Naive thymus-derived CD8-positive, alpha-beta T cell (primary cell): ENCODE measurements at regions of chr9 and their contacts with region 1.

Region 1: DNA sequence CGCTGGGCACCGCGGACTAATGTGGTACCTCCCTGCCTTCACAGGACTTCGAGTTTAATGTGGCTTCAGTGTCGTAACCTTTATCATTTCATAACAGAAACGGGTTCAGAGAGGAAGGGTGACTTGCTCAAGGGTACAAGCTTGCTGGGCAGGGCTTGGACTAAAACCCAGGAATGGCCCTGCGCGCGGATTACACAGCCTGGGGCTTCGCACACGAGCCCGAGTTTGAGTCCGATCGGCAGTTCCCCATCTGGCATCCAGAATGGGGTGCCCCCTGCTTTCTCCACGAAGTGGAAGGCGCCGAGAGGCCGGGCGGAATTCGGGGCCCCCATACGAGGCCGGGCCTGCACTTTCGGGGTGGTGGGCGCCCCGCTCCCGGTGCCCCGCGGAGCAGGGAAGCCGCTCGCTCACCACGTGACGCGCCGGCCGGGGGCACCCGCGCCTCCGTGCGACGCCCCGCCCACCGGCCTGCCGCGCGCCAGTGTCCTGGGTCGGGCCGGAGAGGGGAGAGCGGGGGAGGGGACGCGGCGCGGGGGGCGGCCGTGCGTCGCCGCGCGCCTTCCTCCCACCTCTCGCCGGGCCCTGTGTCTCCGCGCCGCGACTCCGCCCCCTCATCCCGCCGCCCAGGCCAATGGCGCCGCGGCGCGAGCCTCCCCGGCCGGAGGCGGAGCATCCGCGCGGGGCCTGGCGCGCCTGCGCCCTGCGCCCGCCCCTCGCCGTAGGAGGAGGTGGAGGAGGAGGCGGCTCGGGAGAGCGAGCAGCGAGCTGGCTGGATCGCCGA is at the start of gene SET:
- DNase-seq: peak; percentile 83 to 95 (median 92)
- ATAC-seq: peak; percentile 74 to 77
- H3K4me3 Mint-ChIP-seq: peak within 1 kb of the TSS; percentile 86 to 97 (median 91)
- H3K27ac Mint-ChIP-seq: peak within 1 kb of the TSS; percentile 89 to 100 (median 97)
- H3K4me1 Mint-ChIP-seq: peaks cover 37 to 72% (median 66%) of the 10 kb centered on the region in 4 donors
- H3K27me3 Mint-ChIP-seq: no peaks in the 10 kb centered on the region
- polyA plus RNA-seq, gene SET: 179 to 229 (median 209) TPM

Region 2: DNA sequence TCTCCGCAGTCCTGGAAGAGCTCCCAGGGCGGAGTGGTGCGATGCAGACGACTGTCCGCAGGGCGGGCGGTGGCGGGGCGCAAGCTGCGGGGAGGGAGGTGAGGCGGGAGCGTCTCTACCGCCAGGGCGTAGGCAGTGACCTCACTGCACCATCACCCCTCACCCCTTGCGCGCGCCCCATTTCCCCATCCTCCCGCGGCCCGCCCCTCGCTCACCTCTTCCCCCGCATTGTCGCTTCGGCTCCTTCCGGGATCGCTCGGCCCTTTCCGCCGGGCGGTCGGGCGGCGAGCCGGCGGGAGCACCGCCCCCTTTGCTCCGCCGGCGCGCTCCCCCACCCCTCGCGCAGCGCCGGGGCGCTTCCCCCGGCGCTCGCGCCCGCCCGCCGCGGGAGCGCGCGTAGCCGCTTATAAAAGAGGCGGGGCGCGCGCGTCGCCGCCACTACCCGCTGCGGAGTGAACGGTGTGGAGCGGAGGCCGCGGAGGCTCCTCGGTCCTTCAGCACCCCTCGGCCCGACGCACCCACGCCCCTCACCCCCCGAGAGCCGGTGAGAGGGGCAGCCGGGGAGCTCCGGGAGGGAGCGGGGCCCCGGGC is 136.5 kb before region 1 on chr9 and contains the start of gene SPTAN1:
- POLR2A ChIA-PET with region 1: interaction called, 17 read pairs
- DNase-seq: peak; percentile 92 to 98 (median 96)
- ATAC-seq: peak; percentile 83
- H3K4me3 Mint-ChIP-seq: peak within 1 kb of the TSS in 9 of 10 donors; percentile 89 to 95 (median 92)
- H3K27ac Mint-ChIP-seq: peak within 1 kb of the TSS; percentile 91 to 99 (median 96)
- H3K4me1 Mint-ChIP-seq: peaks cover 12 to 36% (median 24%) of the 10 kb centered on the region in 4 donors
- H3K27me3 Mint-ChIP-seq: no peaks in the 10 kb centered on the region
- polyA plus RNA-seq, gene SPTAN1: 38.2 to 117 (median 57.5) TPM

Region 3: DNA sequence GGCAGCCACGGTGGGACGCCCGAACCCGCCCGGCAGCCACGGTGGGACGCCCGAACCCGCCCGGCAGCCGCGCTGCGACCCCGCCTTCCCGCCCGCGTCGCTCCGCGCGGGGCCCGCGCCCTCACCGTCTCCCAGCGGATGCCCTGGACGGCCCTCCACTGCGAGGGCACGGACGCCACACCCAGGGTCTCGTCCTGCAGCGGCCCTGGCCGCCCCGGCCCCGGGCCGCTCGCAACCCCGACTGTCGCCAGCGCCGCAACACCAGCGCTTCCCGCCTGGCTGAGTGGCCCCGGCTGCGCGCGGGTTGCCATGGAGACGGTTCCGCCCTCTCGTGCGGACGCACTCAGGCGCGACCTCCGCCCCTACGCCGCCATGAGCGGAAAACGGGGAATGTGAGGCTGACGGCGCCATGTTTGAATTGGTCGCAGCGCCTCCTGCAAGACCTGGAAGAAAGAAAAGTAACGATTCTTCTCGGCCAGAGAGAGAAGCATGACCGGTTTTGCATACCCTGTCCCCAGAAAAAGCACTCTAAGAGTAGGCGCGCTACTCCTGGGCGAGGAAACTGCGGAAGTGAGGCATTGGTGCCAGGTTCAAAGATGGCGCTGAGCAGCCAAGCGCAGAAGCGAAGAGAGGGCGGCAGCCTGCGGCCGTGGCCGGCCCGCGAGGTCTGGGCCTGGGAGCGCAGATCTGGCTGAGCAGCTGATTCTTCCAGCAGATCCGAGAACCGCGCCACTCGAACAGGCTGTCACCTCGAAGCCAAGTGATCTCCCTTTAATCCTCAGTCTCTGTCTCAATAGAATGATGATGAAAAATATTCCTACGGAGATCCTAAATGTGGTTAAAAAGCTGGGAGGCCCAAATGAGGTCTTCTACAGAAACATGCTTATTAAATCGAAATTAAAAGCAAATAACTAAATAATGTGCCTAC is 32.0 kb before region 1 on chr9 and contains the start of gene DYNC2I2:
- POLR2A ChIA-PET with region 1: interaction called, 34 read pairs
- DNase-seq: peak; percentile 91 to 98 (median 96)
- ATAC-seq: peak; percentile 96 to 98
- H3K4me3 Mint-ChIP-seq: peak within 1 kb of the TSS; percentile 90 to 97 (median 94)
- H3K27ac Mint-ChIP-seq: peak within 1 kb of the TSS; percentile 96 to 100 (median 99)
- H3K4me1 Mint-ChIP-seq: peaks cover 0 to 17% (median 3%) of the 10 kb centered on the region in 4 donors
- H3K27me3 Mint-ChIP-seq: no peaks in the 10 kb centered on the region
- polyA plus RNA-seq, gene DYNC2I2: 2.7 to 4.1 (median 3.9) TPM

Region 4: DNA sequence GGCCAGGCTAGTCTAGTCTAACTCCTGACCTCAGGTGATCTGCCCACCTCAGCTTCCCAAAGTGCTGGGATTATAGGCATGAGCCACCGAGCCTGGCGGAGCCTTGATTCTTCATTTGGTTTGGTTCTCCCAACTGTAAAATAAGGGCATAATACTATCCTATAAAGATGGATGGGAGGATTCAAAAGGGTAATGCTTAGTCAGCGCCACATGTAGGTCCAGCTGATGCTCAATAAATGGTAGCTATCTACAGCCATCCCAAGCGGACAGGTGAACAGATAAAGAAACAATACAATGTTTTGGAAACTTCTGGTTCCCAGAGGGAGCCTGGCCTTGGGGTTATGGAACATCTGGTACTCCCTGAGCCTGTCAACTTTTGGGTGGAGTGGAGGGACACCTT is 13.3 kb before region 1 on chr9:
- POLR2A ChIA-PET with region 1: interaction called, 16 read pairs
- DNase-seq: no peak
- ATAC-seq: no peak
- H3K4me3 Mint-ChIP-seq: no peak overlapping the region
- H3K27ac Mint-ChIP-seq: peak overlapping the region in 1 of 10 donors; percentile 48
- H3K4me1 Mint-ChIP-seq: peaks cover 0 to 3% (median 0%) of the 10 kb centered on the region in 4 donors
- H3K27me3 Mint-ChIP-seq: no peaks in the 10 kb centered on the region

Region 5: DNA sequence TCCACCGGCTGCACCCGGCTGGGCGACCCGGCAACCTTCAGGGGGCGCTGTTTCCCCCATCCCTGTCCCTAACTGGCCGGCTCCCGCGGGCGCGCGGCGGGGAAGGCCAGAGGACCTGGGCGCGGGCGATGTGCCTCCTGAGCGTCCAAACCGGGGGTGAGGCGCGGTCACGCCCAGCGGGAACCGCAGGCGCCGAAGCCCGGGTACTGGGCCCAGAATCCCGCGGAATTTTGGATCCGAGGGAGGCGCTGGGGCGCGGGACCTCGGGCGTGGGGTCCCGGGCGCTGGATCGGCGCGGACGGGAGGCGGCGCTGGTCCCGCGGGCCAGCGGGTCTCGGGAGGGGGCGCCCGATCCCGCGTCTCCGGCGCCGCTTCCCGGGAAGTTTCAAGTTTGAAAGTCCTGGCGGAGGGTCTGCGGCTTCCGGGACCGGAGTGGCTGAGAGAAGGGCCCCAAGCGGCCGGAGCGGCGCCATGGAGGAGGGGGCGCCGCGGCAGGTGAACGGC is 13.8 kb after region 1 on chr9 and contains the start of gene PKN3:
- POLR2A ChIA-PET with region 1: interaction called, 22 read pairs
- DNase-seq: peak; percentile 65 to 91 (median 84)
- ATAC-seq: peak; percentile 87 to 89
- H3K4me3 Mint-ChIP-seq: peak within 1 kb of the TSS; percentile 75 to 93 (median 88)
- H3K27ac Mint-ChIP-seq: peak within 1 kb of the TSS in 9 of 10 donors; percentile 11 to 91 (median 63)
- H3K4me1 Mint-ChIP-seq: peaks cover 2 to 15% (median 10%) of the 10 kb centered on the region in 4 donors
- H3K27me3 Mint-ChIP-seq: no peaks in the 10 kb centered on the region
- polyA plus RNA-seq, gene PKN3: 0.98 to 1.5 (median 1.0) TPM

Region 6: DNA sequence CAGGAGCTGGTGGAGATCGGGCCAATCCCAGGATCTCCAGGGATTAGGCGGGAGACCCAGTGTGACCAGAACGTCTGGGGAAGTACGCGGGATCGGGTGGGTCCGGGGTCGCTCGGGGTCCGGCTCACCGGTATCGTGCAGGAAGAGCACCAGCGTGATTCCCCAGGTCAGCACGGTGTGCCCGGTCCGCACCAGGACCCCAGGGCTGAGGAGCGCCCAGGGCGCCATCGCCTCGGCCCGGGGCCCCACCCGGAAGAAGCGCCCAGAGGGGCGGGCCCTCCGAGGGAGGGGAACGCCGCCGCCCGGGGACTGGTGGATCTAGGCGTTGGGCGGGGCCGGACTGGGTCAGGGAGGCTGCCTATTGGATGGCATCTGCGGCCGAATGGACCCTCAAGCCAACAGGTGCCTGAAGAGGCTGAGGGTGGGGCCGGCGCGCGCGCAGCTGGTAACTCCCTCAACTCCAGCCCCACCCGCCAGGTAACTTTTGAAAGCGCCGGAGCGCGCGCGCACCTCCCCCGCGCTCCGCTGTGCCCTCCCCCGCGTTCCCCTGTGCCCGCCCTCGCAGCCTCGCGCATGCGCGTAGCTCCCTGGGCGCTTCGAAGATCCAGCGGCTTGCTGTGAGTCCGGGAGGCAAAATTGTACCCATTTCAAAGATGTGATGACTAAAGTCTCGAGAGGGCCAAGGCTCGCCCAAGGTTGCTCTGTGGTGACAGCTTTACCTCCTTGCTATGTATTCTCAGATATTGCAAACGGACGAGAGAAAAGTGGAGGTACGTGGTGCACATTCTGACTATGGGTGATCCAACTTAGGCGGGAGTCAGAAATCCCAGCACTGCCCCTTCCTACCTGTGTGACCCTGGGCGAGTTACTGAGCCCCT is 35.4 kb after region 1 on chr9 and contains the start of gene ZDHHC12:
- POLR2A ChIA-PET with region 1: interaction called, 25 read pairs
- DNase-seq: peak; percentile 97 to 100 (median 99)
- ATAC-seq: peak; percentile 98
- H3K4me3 Mint-ChIP-seq: peak within 1 kb of the TSS; percentile 85 to 95 (median 92)
- H3K27ac Mint-ChIP-seq: peak within 1 kb of the TSS; percentile 91 to 99 (median 94)
- H3K4me1 Mint-ChIP-seq: peaks cover 22 to 48% (median 38%) of the 10 kb centered on the region in 4 donors
- H3K27me3 Mint-ChIP-seq: no peaks in the 10 kb centered on the region
- polyA plus RNA-seq, gene ZDHHC12: 51.7 to 75.5 (median 64.3) TPM

Region 7: DNA sequence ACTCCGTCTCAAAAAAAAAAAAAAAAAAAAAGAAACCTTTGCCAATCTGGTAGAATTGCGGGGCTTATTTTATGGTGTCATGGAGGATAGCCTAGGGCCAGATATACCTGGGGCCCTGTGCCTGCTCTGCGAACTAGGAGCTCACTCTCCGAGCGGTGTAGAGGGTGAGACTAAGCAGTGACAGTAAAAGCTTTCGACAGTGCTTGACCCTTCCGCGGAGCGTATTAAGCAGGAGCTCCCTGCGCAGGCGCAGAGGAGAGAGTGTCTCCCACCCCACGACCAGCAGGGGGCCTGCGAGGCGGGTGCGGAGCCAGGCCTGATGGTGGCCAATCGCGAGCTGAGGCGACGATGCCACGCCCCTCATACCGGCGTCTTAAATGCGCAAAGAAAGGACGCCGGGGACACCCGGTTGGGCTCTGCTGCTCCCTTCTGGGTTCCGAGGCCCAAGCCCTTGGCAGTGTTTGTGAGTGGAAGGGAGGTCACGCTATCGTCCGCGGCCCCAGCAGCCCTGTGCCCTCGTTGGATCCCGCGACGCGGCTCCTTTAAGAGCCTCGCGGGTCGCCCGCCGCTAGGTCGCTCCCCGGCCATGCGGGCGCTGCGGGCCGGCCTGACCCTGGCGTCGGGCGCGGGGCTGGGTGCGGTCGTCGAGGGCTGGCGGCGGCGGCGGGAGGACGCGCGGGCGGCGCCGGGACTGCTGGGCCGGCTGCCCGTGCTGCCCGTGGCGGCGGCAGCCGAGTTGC is 129.6 kb after region 1 on chr9 and contains the start of gene ENDOG:
- POLR2A ChIA-PET with region 1: interaction called, 10 read pairs
- DNase-seq: peak; percentile 94 to 98 (median 97)
- ATAC-seq: peak; percentile 90 to 94
- H3K4me3 Mint-ChIP-seq: peak within 1 kb of the TSS; percentile 83 to 93 (median 90)
- H3K27ac Mint-ChIP-seq: peak within 1 kb of the TSS; percentile 59 to 94 (median 92)
- H3K4me1 Mint-ChIP-seq: peaks cover 6 to 26% (median 23%) of the 10 kb centered on the region in 4 donors
- H3K27me3 Mint-ChIP-seq: no peaks in the 10 kb centered on the region
- polyA plus RNA-seq, gene ENDOG: 16.3 to 34.0 (median 19.0) TPM